Common myeloid progenitor, CD34-positive (primary cell): ENCODE measurements at regions of chr7 and their contacts with region 1.

Region 1: DNA sequence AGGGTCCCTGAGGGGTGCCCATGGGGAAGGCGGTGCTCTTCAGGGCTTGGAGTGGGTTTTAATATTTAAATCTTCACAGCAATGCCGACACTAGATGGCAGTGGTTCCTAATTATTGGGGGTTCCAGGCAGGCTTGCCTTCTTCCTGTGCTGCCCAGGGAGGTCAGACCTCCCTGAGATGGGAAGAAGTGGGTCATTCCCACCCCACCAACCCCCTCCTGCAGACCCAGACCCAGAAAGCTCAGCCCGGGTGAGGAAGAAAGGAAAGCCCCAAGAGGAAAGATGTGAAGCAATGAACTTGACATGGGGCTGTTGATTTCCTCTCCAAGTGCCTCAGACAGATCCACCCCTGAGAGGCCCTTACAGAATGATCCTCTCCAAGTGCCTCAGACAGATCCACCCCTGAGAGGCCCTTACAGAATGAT is 85.1 kb upstream of the LANCL2 start:
- DNase-seq: peak; percentile 66 to 78 (median 71)
- H3K4me3 ChIP-seq: no peak overlapping the region
- H3K27ac ChIP-seq: no peak overlapping the region
- H3K4me1 ChIP-seq: no peaks in the 10 kb centered on the region
- H3K27me3 ChIP-seq: peaks cover 0 to 4% (median 0%) of the 10 kb centered on the region in 5 experiments

Region 2: DNA sequence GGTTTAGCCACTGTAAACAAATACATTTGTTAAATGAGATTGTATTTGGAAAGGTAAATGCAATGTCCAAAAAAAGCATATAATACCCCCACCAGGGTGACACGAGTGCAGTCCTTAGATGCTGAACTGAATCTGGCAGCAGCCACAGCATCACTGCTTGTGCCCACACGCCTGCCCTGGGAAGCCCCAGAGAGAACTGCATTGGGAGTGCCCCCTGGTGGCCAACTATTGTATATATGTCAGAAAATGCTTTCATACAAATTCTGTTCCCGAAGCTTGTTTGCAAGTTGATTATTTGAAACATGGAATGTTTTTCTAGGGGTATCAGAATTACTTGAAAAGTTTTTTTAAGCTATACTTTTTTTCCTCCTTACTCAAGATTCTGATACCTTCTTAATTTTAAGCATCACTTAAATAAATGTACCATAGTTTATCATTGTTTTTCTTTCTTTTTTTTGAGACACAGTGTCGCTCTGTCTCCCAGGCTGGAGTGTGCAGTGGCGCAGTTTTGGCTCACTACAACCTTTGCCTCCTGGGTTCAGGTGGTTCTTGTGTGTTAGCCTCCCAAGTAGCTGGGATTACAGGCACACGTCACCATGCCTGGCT is 135.2 kb after region 1 on chr7:
- CTCF ChIA-PET with region 1: interaction called, 76 read pairs
- POLR2A ChIA-PET with region 1: no interaction called
- DNase-seq: peak; percentile 78 to 88 (median 86)
- H3K4me3 ChIP-seq: no peak overlapping the region
- H3K27ac ChIP-seq: no peak overlapping the region
- H3K4me1 ChIP-seq: no peaks in the 10 kb centered on the region
- H3K27me3 ChIP-seq: no peaks in the 10 kb centered on the region